ENCODE measurements at regions of chr17 and their contacts with region 1.

Region 1: GRCh38 chr17:69523244-69523861 is 108.9 kb downstream of the MAP2K6 start:
- DNase-seq: no peak
- ATAC-seq: peak; percentile 81
- H3K4me3 Mint-ChIP-seq: no peak overlapping the region
- H3K27ac Mint-ChIP-seq: peak overlapping the region; percentile 47
- H3K4me1 Mint-ChIP-seq: peaks cover 7% of the 10 kb centered on the region
- H3K27me3 Mint-ChIP-seq: no peaks in the 10 kb centered on the region
- CTCF ChIP-seq: peak; percentile 48

Region 2: DNA sequence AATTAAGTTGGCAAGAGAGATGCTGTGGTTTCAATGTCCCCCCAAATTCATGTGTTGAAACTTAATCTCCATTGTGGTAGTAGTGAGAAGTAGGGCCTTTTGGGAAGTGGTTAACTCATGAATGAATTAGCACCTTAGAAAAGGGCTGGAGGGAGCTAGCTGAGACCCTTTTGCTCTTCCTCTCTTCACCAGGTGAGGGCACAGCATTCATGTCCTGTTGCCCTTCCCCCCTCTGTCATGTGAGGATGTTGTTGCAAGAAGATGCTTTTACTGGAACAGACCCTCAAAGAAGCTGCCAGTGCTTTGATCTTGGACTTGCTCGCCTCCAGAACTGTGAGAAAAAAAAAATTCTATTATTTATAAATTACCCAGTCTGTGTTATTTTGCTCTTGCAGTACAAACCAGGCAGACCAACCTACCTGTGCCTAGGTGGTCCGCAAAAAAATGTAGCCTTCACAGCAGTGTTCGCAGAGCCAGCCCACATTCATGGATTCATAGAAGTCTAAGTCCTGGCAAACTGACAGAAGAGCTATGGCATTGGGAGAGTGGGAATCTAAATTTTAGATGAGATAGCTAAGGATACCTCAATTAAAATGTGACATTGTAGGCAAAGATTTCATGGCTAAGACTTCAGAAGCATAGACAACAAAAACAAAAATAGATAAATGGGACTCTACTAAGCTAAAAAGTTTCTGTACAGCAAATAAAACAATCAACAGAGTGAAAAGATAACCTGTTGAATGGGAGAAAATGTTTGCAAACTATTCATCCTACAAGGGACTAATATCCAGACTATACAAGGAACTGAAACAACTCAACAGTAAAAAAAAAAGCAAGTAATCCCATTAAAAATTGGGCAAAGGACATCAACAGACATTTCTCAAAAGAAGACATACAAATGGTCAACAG is 164.4 kb before region 1 on chr17:
- CTCF ChIA-PET with region 1: interaction called, 18 read pairs
- POLR2A ChIA-PET with region 1: no interaction called
- DNase-seq: peak; percentile 55
- ATAC-seq: peak; percentile 98
- H3K4me3 Mint-ChIP-seq: no peak overlapping the region
- H3K27ac Mint-ChIP-seq: no peak overlapping the region
- H3K4me1 Mint-ChIP-seq: peaks cover 18% of the 10 kb centered on the region
- H3K27me3 Mint-ChIP-seq: no peaks in the 10 kb centered on the region
- CTCF ChIP-seq: no peak

Region 3: GRCh38 chr17:69511250-69511649 is 12.1 kb before region 1 on chr17:
- CTCF ChIA-PET with region 1: interaction called, 14 read pairs
- POLR2A ChIA-PET with region 1: no interaction called
- DNase-seq: no peak
- ATAC-seq: no peak
- H3K4me3 Mint-ChIP-seq: no peak overlapping the region
- H3K27ac Mint-ChIP-seq: peak overlapping the region; percentile 34
- H3K4me1 Mint-ChIP-seq: peaks cover 15% of the 10 kb centered on the region
- H3K27me3 Mint-ChIP-seq: no peaks in the 10 kb centered on the region
- CTCF ChIP-seq: no peak

Region 4: DNA sequence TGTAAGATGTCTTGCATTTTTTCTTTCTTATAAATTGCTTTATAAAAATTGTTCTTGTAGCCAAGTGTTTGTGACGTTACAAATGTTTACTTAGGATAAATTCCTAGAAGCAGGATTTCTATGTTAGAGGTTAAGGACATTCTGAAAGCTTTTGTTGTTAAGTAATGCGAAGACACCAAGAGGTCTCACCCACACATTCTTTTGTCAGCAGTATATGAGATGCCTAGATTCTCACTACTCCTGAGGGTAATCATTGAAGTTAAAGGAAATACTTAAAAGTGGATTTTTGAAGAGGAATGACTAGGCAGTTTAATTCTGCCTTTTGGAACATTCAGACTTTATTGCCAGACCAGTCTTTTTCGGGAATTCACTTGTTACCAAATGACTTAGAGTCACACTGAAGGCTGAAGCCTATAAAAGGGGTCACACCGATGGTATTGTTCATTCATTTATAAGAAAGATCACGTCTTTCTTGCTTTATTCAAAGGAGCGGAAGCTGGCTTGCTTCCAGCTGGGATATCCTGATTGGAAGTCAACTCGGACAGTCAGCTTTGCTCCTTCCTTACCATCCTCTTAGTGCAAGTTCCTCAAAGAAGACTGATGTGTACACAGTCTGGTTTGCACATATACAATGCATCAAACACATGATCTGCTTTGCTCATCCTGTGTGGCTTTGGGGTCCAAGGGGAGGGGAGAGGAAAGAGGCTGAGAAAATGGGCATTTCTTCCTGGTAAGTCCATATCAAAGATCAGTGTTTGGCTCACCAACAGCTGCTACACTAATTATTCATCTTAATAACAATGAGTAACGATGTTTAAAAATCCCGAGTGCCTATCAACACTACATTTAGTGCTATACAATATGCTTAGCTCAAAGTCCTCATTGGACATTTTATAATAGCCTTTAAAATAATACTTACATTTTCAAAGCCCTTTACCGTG is 51.2 kb after region 1 on chr17:
- CTCF ChIA-PET with region 1: interaction called, 11 read pairs
- POLR2A ChIA-PET with region 1: no interaction called
- DNase-seq: no peak
- ATAC-seq: peak; percentile 65
- H3K4me3 Mint-ChIP-seq: no peak overlapping the region
- H3K27ac Mint-ChIP-seq: no peak overlapping the region
- H3K4me1 Mint-ChIP-seq: peaks cover 26% of the 10 kb centered on the region
- H3K27me3 Mint-ChIP-seq: peaks cover 10% of the 10 kb centered on the region
- CTCF ChIP-seq: no peak

Measured in WTC11 (cell line).